Left ventricle myocardium inferior (tissue), 1 donor: ENCODE measurements at regions of chr22 and their contacts with region 1.

Region 1: GRCh38 chr22:46563381-46564083 is 26.1 kb upstream of the CELSR1 start:
- DNase-seq: peak; percentile 83
- H3K4me3 ChIP-seq: peak overlapping the region; percentile 13
- H3K27ac ChIP-seq: peak overlapping the region; percentile 58
- H3K4me1 ChIP-seq: peaks cover 17% of the 10 kb centered on the region
- H3K27me3 ChIP-seq: no peaks in the 10 kb centered on the region
- CTCF ChIP-seq: peak; percentile 81

Region 2: DNA sequence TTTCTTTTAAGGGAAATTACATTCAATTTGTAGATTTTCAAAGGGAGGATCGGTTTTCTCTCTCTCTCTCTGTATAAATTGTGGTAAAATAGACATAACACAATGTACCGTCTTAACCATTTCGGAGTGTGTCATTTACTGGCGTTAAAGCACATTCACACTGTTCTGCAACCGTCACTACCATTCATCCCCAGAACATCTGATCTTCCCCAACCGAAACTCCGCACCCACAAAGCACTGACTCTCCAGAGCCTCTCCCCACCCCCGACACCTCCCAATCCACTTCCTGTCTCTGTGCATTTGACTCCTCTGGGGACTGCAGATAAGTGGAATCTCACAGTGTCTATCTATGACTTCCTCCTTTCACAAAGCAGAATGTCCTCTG is 40.8 kb after region 1 on chr22:
- intact Hi-C with region 1: no loop called
- DNase-seq: no peak
- H3K4me3 ChIP-seq: peak overlapping the region; percentile 4
- H3K27ac ChIP-seq: peak overlapping the region; percentile 71
- H3K4me1 ChIP-seq: peaks cover 65% of the 10 kb centered on the region
- H3K27me3 ChIP-seq: no peaks in the 10 kb centered on the region
- CTCF ChIP-seq: no peak

Region 3: GRCh38 chr22:46638601-46639431 is 75.3 kb after region 1 on chr22:
- intact Hi-C with region 1: no loop called
- DNase-seq: no peak
- H3K4me3 ChIP-seq: no peak overlapping the region
- H3K27ac ChIP-seq: peak overlapping the region; percentile 53
- H3K4me1 ChIP-seq: peaks cover 83% of the 10 kb centered on the region
- H3K27me3 ChIP-seq: no peaks in the 10 kb centered on the region
- CTCF ChIP-seq: no peak

Region 4: GRCh38 chr22:46674367-46674781 is 110.8 kb after region 1 on chr22:
- intact Hi-C with region 1: loop called (anchors 10 kb)
- DNase-seq: peak; percentile 66
- H3K4me3 ChIP-seq: peak overlapping the region; percentile 56
- H3K27ac ChIP-seq: peak overlapping the region; percentile 76
- H3K4me1 ChIP-seq: peaks cover 84% of the 10 kb centered on the region
- H3K27me3 ChIP-seq: no peaks in the 10 kb centered on the region
- CTCF ChIP-seq: no peak